Sigmoid colon (tissue), 7 donors: ENCODE measurements at regions of chr4 and their contacts with region 1.

Region 1: DNA sequence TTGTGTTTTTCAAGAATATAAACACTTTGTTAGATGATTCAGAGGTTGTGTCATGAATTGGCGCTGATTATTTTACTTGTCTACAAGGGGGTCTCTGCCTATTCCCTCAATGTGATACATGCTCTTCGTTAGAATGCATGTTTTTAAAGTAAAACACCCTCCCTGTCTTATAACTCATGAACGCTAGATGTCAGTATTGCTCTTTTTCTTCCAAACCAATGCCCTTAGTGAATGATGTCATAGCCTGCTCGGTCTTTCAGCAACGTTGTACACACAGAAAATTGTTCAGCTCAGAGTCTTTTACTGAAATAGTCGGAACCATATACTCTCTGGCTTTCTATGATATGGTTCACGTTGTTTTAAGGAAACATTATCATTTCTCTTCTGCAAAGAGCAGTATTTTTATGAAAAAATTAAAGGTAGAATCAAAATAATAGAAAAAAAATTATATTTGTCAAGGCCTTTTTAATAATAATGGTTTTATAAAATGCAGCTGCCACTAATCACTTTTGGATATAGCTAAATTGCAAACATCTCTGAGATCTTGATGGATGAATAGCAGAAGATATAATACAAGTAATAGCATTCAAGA is 292.9 kb downstream of the TLL1 start:
- DNase-seq: no peak
- H3K4me3 ChIP-seq: no peak overlapping the region
- H3K27ac ChIP-seq: no peak overlapping the region
- H3K4me1 ChIP-seq: no peaks in the 10 kb centered on the region
- H3K27me3 ChIP-seq: no peaks in the 10 kb centered on the region
- CTCF ChIP-seq: peak; percentile 14 to 65 (median 55)
- EP300 ChIP-seq: no peak
- POLR2A ChIP-seq: no peak

Region 2: DNA sequence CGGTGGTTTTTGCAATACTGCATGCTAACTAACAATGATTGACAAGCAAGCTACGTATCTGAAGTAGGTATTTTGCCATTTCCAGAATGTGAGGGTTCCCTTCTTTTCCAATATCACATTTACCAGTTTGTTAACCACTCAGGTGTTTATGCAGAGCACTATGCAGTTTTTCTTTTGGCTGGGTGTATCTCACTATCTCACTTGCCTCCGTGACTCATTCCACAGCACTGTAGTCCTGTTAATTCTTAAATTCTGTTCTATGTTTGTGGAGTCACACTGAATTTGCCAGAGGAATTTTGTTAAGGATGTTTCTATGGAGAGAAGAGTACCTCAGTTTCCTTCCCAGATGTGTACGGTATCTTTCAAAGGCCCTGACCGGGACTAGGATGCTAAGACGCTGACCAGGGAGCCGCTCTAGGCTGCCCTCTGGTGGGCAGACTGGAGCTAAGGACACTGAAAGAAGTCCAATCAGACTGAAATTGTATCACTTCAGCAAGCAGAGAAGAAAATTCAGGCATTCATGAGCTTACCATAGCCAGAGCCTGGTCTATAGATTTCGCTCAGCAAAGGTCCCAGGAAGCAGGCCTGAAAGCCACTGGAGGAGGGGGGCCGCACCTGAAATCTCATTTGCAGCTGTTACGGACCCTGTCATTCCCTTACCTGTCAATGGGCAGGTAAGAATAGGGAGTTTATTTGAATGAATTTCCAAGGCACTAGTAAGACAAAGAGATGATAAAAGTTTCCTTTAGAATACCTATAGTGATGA is 1456.7 kb after region 1 on chr4:
- intact Hi-C with region 1: loop called (anchors 10 kb)
- DNase-seq: no peak
- H3K4me3 ChIP-seq: no peak overlapping the region
- H3K27ac ChIP-seq: no peak overlapping the region
- H3K4me1 ChIP-seq: no peaks in the 10 kb centered on the region
- H3K27me3 ChIP-seq: no peaks in the 10 kb centered on the region
- CTCF ChIP-seq: peak in 2 of 4 experiments; percentile 16 to 59
- EP300 ChIP-seq: no peak
- POLR2A ChIP-seq: no peak